ENCODE measurements at regions of chr3 and their contacts with region 1.

Region 1: GRCh38 chr3:50587806-50588758 is 18.8 kb downstream of the HEMK1 start:
- DNase-seq: no peak
- H3K4me3 Mint-ChIP-seq: no peak overlapping the region
- H3K27ac Mint-ChIP-seq: no peak overlapping the region
- H3K4me1 Mint-ChIP-seq: peaks cover 18% of the 10 kb centered on the region
- H3K27me3 Mint-ChIP-seq: no peaks in the 10 kb centered on the region
- CTCF ChIP-seq: no peak

Region 2: GRCh38 chr3:50600841-50601591 is 12.9 kb after region 1 on chr3:
- CTCF ChIA-PET with region 1: interaction called, 8 read pairs
- POLR2A ChIA-PET with region 1: interaction called, 15 read pairs
- intact Hi-C with region 1: no loop called
- DNase-seq: peak; percentile 98
- H3K4me3 Mint-ChIP-seq: peak overlapping the region; percentile 30
- H3K27ac Mint-ChIP-seq: peak overlapping the region; percentile 89
- H3K4me1 Mint-ChIP-seq: peaks cover 21% of the 10 kb centered on the region
- H3K27me3 Mint-ChIP-seq: no peaks in the 10 kb centered on the region
- CTCF ChIP-seq: no peak